ENCODE measurements at regions of chr10 and their contacts with region 1.

Region 1: DNA sequence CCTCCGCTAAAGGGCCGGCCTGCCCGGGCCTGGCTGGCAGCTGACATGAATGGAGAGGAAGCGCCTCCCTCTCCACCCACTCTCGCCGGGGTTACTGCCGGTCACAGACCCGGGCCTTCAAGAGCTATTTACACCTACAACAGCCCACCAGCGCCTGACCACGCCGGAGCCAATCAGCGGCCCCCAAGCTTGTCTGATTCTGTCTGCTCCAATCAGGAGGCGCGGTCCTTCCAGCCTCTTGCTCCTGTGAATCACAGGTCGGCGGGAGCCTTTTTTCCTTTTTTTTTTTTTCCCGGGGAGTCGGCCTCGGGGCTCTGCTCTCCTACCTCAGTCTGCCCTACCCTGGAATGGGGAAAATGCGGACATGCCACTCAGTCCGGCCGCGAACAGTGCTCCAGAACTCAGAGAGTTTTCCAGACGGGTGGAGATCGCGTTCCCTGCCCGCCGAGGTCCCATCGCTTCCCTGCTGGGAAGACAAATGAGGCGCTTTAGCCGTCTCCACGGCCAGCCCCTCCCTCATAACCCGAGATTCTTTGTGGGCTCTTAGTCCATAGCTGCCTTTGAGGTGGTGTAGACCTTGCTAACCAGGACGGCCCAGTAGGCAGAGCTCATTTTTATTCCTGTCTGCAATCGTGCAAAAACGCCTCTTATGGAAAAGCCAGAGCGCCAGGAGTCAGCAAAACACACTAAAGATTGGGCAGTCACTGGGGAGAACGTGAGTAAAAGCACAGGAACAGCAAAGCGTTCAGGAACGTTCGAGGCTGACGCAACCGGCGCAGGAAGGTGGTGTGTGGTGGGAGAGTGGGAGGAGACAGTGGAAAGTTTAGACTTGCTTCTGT is 26.5 kb downstream of the SCD start:
- H3K4me3 ChIP-seq: peak overlapping the region; percentile 49
- H3K27ac ChIP-seq: peak overlapping the region; percentile 97
- H3K4me1 ChIP-seq: peaks cover 21% of the 10 kb centered on the region
- CTCF ChIP-seq: no peak

Region 2: DNA sequence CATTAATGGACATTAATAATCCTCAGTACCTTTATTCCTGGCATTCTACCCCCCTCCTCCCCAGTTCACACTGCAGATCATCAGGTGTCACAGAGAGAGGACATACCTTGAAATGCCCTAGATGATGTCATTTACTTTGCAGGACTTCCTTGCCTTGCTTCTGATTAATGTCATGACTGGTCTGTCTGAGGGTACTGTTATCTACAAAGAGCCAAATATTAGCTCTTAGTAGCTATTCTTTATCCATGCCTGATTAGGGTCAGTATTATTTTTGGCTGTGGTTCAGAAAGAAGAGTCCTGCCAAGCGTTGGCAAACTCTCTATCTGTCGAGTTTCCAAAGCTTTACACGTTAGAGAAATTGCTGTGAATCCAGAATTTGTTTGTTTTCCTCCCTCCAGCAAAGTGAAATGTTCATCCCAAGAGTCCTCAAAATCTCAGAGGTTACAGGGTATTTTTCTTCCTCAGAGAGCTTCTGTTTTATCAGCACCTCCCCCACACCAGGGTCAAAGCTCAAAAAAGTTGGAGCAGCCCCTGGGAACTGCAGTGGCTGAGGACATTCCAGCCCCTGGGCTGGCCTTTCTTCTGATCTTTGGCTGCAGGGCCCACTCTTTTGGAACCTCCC is 13.9 kb before region 1 on chr10:
- CTCF ChIA-PET with region 1: interaction called, 3 read pairs
- POLR2A ChIA-PET with region 1: interaction called, 15 read pairs
- H3K4me3 ChIP-seq: no peak overlapping the region
- H3K27ac ChIP-seq: no peak overlapping the region
- H3K4me1 ChIP-seq: peaks cover 5% of the 10 kb centered on the region
- CTCF ChIP-seq: no peak

Region 3: DNA sequence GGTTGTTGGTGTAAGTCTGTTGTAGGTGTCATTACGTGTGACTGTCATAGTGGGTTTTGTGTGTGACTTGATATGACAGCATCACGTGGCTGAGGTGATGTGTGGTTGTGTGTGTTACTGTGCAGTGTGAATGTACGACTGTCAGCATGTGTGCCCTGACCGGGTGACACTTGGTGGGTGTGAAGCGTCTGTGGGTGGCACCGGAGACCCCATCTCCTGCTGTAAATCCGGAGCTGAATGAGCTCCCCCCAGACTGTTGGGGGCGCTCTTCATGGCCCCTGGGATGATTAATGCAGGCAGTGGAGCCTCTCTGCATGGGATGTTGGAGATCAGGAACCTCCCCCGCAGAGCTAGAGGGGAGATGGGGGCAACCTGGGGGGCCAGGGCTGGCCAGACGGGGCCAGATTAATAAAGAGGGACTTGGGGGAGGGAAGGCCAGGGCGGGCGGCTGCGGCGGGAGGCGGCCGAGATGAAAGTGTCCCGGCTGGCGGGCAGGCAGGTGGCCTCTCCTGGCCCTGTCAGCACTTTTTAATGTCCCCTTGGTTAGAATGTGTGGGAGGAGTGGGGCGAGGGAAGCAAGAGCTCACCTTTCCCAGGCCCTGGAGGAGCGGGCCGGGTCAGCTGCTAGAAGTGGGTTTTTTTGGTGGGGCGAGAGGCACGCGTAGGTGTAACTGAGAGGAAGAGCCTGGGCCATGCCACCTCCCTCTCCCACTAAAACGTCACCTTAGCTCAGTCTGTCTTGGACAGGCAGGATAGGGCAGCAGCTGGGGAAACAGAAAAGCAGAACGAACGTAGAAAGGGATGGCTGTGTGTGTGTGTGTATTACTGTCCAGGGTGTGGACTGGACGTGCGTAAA is 196.3 kb after region 1 on chr10:
- CTCF ChIA-PET with region 1: no interaction called
- POLR2A ChIA-PET with region 1: no interaction called
- H3K4me3 ChIP-seq: peak overlapping the region; percentile 49
- H3K27ac ChIP-seq: no peak overlapping the region
- H3K4me1 ChIP-seq: no peaks in the 10 kb centered on the region
- CTCF ChIP-seq: 0 out of 2 replicates have a peak, but pooled peaks have one; percentile 37

Region 4: GRCh38 chr10:100817268-100817839 is 443.8 kb after region 1 on chr10:
- CTCF ChIA-PET with region 1: no interaction called
- POLR2A ChIA-PET with region 1: no interaction called
- H3K4me3 ChIP-seq: no peak overlapping the region
- H3K27ac ChIP-seq: no peak overlapping the region
- H3K4me1 ChIP-seq: no peaks in the 10 kb centered on the region
- CTCF ChIP-seq: no peak